ENCODE measurements at regions of chr20 and their contacts with region 1.

Region 1: GRCh38 chr20:50450881-50451752 is 59.1 kb upstream of the PTPN1 start:
- DNase-seq: peak; percentile 51
- H3K4me3 ChIP-seq: peak overlapping the region; percentile 16
- H3K27ac ChIP-seq: peak overlapping the region; percentile 83
- H3K4me1 ChIP-seq: peaks cover 28% of the 10 kb centered on the region
- H3K27me3 ChIP-seq: no peaks in the 10 kb centered on the region
- CTCF ChIP-seq: no peak

Region 2: GRCh38 chr20:50221501-50222323 is 229.4 kb before region 1 on chr20:
- CTCF ChIA-PET with region 1: no interaction called
- POLR2A ChIA-PET with region 1: no interaction called
- intact Hi-C with region 1: no loop called
- DNase-seq: no peak
- H3K4me3 ChIP-seq: no peak overlapping the region
- H3K27ac ChIP-seq: no peak overlapping the region
- H3K4me1 ChIP-seq: peaks cover under 1% of the 10 kb centered on the region
- H3K27me3 ChIP-seq: no peaks in the 10 kb centered on the region
- CTCF ChIP-seq: no peak

Region 3: GRCh38 chr20:50366270-50367103 is 84.6 kb before region 1 on chr20:
- CTCF ChIA-PET with region 1: no interaction called
- POLR2A ChIA-PET with region 1: no interaction called
- intact Hi-C with region 1: loop called (anchors 2 kb)
- DNase-seq: peak; percentile 99
- H3K4me3 ChIP-seq: no peak overlapping the region
- H3K27ac ChIP-seq: peak overlapping the region; percentile 91
- H3K4me1 ChIP-seq: peaks cover 20% of the 10 kb centered on the region
- H3K27me3 ChIP-seq: no peaks in the 10 kb centered on the region
- CTCF ChIP-seq: no peak

Region 4: DNA sequence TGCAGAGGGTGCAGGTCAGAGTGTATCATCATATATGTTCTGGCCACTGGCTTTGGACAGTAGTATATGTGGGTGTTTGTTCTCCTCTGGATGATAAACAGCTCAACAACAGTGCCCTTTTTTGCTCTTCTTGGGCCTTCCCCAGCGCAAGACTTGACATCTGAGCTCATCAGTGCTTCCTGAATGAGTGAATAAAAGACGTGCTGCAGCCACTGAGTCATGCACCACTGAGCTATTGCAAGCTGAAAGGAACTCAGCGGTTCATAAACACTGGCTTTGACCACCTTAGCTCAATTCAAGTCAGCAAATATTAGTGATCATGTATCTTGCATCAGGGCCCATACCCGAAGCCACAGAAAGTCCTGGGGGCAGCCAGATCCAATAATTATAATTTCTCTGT is 677.1 kb after region 1 on chr20:
- CTCF ChIA-PET with region 1: no interaction called
- POLR2A ChIA-PET with region 1: no interaction called
- intact Hi-C with region 1: no loop called
- DNase-seq: no peak
- H3K4me3 ChIP-seq: no peak overlapping the region
- H3K27ac ChIP-seq: no peak overlapping the region
- H3K4me1 ChIP-seq: no peaks in the 10 kb centered on the region
- H3K27me3 ChIP-seq: peaks cover 3% of the 10 kb centered on the region
- CTCF ChIP-seq: no peak

Measured in A673 (cell line).